Ascending aorta (tissue), 2 donors: ENCODE measurements at regions of chr22 and their contacts with region 1.

Region 1: GRCh38 chr22:32660292-32660691 is 141.2 kb upstream of the TIMP3 start:
- DNase-seq: peak in 1 of 2 donors; percentile 83
- H3K4me3 ChIP-seq: no peak overlapping the region
- H3K27ac ChIP-seq: no peak overlapping the region
- H3K4me1 ChIP-seq: no peaks in the 10 kb centered on the region
- H3K27me3 ChIP-seq: no peaks in the 10 kb centered on the region
- CTCF ChIP-seq: peak; percentile 67 to 81 (median 71)

Region 2: DNA sequence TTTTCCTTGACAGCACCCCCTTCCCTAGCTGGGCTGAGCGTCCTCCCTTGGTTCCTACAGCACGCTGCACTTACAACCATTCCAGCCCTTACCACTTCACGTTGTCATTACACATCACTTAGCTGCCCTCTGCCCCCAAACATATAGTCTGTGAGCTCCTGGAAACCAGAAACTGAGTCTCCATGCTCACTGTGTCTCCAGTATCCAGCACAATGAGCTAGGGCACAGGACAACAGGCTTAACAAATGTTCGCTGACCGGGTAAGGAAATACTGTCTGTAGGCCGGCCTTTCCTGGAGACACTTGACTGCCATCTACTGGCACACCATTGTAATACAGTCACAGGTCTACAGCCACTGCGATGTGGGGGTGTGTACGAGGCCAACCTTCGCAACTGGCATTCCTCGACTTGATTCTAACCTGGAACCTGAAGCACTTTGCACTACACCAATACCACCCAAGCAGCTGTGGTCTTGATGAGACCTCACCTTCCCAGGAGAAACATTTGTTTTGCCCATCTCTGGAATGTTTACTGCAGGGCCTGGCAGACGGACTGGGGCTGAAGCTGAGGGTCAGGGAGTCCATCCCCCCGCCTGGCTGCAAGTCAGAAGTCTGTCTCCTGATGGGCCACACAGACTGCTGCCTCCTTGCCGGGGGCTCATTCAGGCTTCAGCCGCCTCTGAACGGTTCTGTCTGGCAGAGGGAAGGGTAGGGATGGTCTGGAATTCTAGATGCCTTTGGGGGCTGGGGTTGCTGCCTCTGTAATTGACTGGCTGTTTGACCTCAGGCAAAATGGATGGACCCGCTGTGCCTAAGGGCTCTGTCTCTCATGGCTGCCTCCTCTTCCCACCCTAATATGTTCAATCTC is 325.8 kb after region 1 on chr22:
- intact Hi-C with region 1: loop called (anchors 1 kb)
- DNase-seq: peak in 1 of 2 donors; percentile 85
- H3K4me3 ChIP-seq: no peak overlapping the region
- H3K27ac ChIP-seq: no peak overlapping the region
- H3K4me1 ChIP-seq: no peaks in the 10 kb centered on the region
- H3K27me3 ChIP-seq: no peaks in the 10 kb centered on the region
- CTCF ChIP-seq: peak; percentile 70 to 85 (median 82)

Region 3: GRCh38 chr22:33000342-33001280 is 340.3 kb after region 1 on chr22:
- intact Hi-C with region 1: loop called (anchors 1 kb)
- DNase-seq: peak in 1 of 2 donors; percentile 72
- H3K4me3 ChIP-seq: no peak overlapping the region
- H3K27ac ChIP-seq: no peak overlapping the region
- H3K4me1 ChIP-seq: no peaks in the 10 kb centered on the region
- H3K27me3 ChIP-seq: no peaks in the 10 kb centered on the region
- CTCF ChIP-seq: peak; percentile 77 to 90 (median 84)

Region 4: GRCh38 chr22:33986167-33986771 is 1326.0 kb after region 1 on chr22:
- intact Hi-C with region 1: no loop called
- DNase-seq: no peak
- H3K4me3 ChIP-seq: no peak overlapping the region
- H3K27ac ChIP-seq: no peak overlapping the region
- H3K4me1 ChIP-seq: no peaks in the 10 kb centered on the region
- H3K27me3 ChIP-seq: no peaks in the 10 kb centered on the region
- CTCF ChIP-seq: no peak